Activated naive CD8-positive, alpha-beta T cell treated with anti-CD3 and anti-CD28 coated beads, Interleukin-2, amount 10 ng/mL, durations not matched to agents 7 days and 5 days (primary cell): ENCODE measurements at regions of chr14 and their contacts with region 1.

Region 1: GRCh38 chr14:22549981-22550673 is 38.9 kb downstream of the DAD1 start:
- DNase-seq: no peak
- ATAC-seq: peak; percentile 42
- H3K4me3 Mint-ChIP-seq: peak overlapping the region; percentile 86
- H3K27ac Mint-ChIP-seq: peak overlapping the region; percentile 99
- H3K4me1 Mint-ChIP-seq: peaks cover 88% of the 10 kb centered on the region
- H3K27me3 Mint-ChIP-seq: no peaks in the 10 kb centered on the region

Region 2: DNA sequence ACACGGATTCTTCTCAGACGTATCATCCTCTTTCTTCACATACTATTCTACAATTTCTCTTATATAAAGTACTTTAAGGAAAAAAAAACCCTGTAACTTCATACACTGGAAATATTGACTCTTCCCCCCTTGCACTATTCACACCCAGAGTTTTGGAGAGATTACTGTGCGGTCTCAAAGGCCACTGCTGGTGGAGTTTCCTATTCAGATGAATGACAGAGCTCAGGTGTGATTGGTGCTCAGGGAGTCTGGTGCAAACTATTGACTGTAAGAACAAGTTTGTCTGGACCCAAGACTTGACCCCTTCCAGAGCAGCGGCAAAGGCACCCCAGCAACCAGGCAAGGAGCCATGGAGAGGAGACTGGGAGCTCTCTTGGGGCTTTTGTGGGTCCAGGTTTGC is 689.0 kb before region 1 on chr14:
- POLR2A ChIA-PET with region 1: interaction called, 10 read pairs
- DNase-seq: no peak
- ATAC-seq: peak; percentile 33
- H3K4me3 Mint-ChIP-seq: peak overlapping the region; percentile 68
- H3K27ac Mint-ChIP-seq: peak overlapping the region; percentile 61
- H3K4me1 Mint-ChIP-seq: peaks cover 6% of the 10 kb centered on the region
- H3K27me3 Mint-ChIP-seq: peaks cover 20% of the 10 kb centered on the region

Region 3: DNA sequence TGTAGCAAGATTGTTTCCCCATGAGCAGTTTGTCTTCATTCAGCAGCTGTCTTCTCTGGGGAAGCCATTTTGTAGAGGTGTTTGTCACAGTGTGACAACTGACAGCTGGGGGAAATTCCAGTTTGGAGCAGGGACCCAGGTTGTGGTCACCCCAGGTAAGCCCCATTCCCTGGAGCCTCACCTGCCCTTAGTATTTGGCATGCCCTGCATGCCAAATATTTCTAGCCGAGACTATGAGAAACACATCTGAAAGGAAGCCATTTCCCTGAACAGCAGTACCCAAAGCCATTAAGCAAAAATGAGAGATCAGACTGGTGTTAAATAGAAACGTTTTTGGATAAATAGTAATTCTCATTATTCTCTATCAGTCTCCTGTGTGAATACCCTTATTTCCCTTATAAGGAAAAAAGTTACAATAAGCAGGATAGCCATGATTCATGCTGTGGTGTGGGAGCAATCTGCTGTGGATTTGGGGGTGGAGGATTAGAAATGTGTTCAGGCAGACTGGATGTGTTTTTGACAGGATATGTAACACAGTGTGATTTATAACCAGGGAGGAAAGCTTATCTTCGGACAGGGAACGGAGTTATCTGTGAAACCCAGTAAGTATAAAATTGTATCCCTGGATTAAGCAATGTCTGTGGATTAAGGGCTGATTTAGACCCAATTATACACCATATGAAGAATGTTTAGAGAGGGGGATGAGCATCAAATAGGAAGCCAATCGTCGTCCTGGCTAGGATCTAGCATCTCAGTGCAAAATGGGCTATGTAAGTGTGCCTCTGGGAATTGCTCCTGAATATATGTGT is 30.0 kb before region 1 on chr14:
- POLR2A ChIA-PET with region 1: interaction called, 646 read pairs
- DNase-seq: no peak
- ATAC-seq: no peak
- H3K4me3 Mint-ChIP-seq: peak overlapping the region; percentile 99
- H3K27ac Mint-ChIP-seq: peak overlapping the region; percentile 98
- H3K4me1 Mint-ChIP-seq: peaks cover 74% of the 10 kb centered on the region
- H3K27me3 Mint-ChIP-seq: no peaks in the 10 kb centered on the region

Region 4: GRCh38 chr14:22531451-22532344 is 18.4 kb before region 1 on chr14:
- POLR2A ChIA-PET with region 1: interaction called, 452 read pairs
- DNase-seq: no peak
- ATAC-seq: peak; percentile 23
- H3K4me3 Mint-ChIP-seq: peak overlapping the region; percentile 82
- H3K27ac Mint-ChIP-seq: peak overlapping the region; percentile 88
- H3K4me1 Mint-ChIP-seq: peaks cover 87% of the 10 kb centered on the region
- H3K27me3 Mint-ChIP-seq: no peaks in the 10 kb centered on the region

Region 5: GRCh38 chr14:22589096-22589839 is 39.1 kb after region 1 on chr14 and contains the start of gene DAD1:
- POLR2A ChIA-PET with region 1: interaction called, 31 read pairs
- DNase-seq: peak; percentile 100
- ATAC-seq: peak; percentile 93
- H3K4me3 Mint-ChIP-seq: peak within 1 kb of the TSS; percentile 90
- H3K27ac Mint-ChIP-seq: peak within 1 kb of the TSS; percentile 100
- H3K4me1 Mint-ChIP-seq: peaks cover 44% of the 10 kb centered on the region
- H3K27me3 Mint-ChIP-seq: no peaks in the 10 kb centered on the region
- total RNA-seq, gene DAD1: 124 to 148 TPM